ENCODE measurements at regions of chr4 and their contacts with region 1.

Region 1: DNA sequence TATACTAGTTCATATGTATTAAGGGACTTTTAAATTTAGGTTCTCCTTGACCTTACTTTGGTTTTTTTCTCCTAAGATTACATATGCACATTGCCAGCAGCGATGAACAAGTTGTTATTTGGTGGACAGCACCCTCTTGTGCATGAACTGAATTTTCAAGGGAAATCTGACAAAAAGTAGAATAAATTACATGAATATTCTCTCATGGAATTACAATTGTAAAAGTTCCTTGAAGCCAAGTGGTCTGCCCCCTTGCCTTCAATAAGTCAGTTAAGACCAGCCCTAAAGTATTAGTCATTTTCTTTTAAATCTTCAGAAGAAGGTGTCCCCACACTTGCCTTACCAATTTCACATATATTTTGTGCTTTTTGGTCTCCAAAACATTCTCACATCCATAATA is 30.7 kb upstream of the SMARCA5 start:
- DNase-seq: no peak
- ATAC-seq: no peak
- H3K4me3 Mint-ChIP-seq: no peak overlapping the region
- H3K27ac Mint-ChIP-seq: no peak overlapping the region
- H3K4me1 Mint-ChIP-seq: no peaks in the 10 kb centered on the region
- H3K27me3 Mint-ChIP-seq: peaks cover 6% of the 10 kb centered on the region
- CTCF ChIP-seq: no peak

Region 2: DNA sequence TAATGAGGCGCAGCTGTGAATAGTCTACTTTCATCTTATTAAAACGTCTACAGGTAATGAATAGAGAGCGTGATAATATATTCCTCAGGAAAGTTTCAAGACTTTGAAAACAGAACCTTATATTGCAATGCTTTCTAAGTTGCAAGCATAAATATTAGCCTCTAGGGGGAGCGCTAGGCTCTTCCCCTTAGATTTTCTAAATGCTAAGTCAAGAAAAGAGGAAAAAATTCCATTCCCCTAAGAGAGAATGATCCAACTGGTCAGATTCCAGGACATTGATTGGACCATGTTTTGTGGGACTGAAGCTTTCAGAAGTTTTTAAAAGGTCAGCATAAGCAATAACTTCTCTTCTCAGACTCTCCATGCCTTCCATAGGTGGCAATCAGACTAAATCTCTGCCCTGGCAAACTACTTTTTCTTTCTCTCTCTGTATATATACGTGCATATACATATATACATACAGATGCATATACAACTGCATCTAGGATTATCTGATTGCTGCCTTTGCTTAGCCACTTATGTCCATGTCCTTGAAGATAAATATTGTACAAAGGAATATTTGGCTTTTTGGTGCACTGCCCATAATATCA is 1129.6 kb before region 1 on chr4:
- CTCF ChIA-PET with region 1: no interaction called
- POLR2A ChIA-PET with region 1: no interaction called
- intact Hi-C with region 1: loop called (anchors 2 kb)
- DNase-seq: no peak
- ATAC-seq: no peak
- H3K4me3 Mint-ChIP-seq: no peak overlapping the region
- H3K27ac Mint-ChIP-seq: no peak overlapping the region
- H3K4me1 Mint-ChIP-seq: peaks cover 5% of the 10 kb centered on the region
- H3K27me3 Mint-ChIP-seq: no peaks in the 10 kb centered on the region
- CTCF ChIP-seq: no peak

Region 3: GRCh38 chr4:142984871-142985585 is 497.8 kb before region 1 on chr4:
- CTCF ChIA-PET with region 1: no interaction called
- POLR2A ChIA-PET with region 1: no interaction called
- intact Hi-C with region 1: loop called (anchors 2 kb)
- DNase-seq: no peak
- ATAC-seq: no peak
- H3K4me3 Mint-ChIP-seq: no peak overlapping the region
- H3K27ac Mint-ChIP-seq: no peak overlapping the region
- H3K4me1 Mint-ChIP-seq: no peaks in the 10 kb centered on the region
- H3K27me3 Mint-ChIP-seq: no peaks in the 10 kb centered on the region
- CTCF ChIP-seq: no peak

Region 4: DNA sequence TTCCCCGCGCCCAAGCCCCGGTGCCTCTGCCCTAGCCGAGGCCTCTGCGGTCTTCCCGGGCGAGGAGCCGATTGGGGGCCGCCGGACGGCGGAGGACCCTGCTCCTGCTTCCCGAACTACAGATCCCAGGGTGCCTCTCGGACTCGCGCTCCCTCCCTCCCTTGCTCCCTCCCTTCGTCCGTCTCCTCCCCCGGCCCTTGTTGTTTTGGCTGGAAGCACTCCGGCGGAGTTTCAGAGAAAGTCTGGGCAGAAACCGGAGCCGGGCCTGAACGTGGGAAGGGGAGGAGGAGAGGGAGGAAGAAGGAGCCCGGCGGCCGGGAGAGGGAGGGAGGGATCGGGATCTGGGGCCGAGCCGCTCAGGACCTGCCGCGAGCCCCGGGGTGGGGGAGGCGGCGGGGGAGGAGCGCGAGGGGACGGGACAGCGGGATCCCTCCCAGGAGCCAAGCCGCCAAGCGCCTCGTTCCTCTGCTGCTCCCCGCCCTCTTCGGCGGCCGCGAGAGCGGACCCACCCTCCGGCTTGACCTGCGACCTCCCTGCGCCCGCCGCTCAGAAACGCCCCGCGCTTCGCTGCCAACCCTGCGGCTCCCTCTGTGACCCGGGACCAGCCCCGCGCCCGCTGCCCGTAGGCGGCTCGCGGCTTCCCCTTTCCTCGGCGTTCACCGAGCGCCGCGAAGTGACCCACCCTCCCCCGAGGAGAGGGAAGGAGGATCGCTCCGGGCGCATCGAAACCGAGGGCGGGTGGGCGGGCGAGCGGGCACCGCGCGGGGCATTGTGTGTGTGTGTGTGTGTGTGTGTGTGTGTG is 146.7 kb before region 1 on chr4:
- CTCF ChIA-PET with region 1: no interaction called
- POLR2A ChIA-PET with region 1: no interaction called
- intact Hi-C with region 1: loop called (anchors 2 kb)
- DNase-seq: peak; percentile 67
- ATAC-seq: peak; percentile 57
- H3K4me3 Mint-ChIP-seq: peak overlapping the region; percentile 95
- H3K27ac Mint-ChIP-seq: peak overlapping the region; percentile 56
- H3K4me1 Mint-ChIP-seq: peaks cover 14% of the 10 kb centered on the region
- H3K27me3 Mint-ChIP-seq: peaks cover 15% of the 10 kb centered on the region
- CTCF ChIP-seq: no peak

Region 5: GRCh38 chr4:143399113-143399949 is 83.5 kb before region 1 on chr4:
- CTCF ChIA-PET with region 1: no interaction called
- POLR2A ChIA-PET with region 1: no interaction called
- intact Hi-C with region 1: loop called (anchors 1 kb)
- DNase-seq: no peak
- ATAC-seq: peak; percentile 56
- H3K4me3 Mint-ChIP-seq: no peak overlapping the region
- H3K27ac Mint-ChIP-seq: no peak overlapping the region
- H3K4me1 Mint-ChIP-seq: peaks cover 30% of the 10 kb centered on the region
- H3K27me3 Mint-ChIP-seq: no peaks in the 10 kb centered on the region
- CTCF ChIP-seq: no peak

Region 6: GRCh38 chr4:143458966-143459365 is 23.9 kb before region 1 on chr4:
- CTCF ChIA-PET with region 1: no interaction called
- POLR2A ChIA-PET with region 1: no interaction called
- intact Hi-C with region 1: no loop called
- DNase-seq: no peak
- ATAC-seq: no peak
- H3K4me3 Mint-ChIP-seq: no peak overlapping the region
- H3K27ac Mint-ChIP-seq: no peak overlapping the region
- H3K4me1 Mint-ChIP-seq: no peaks in the 10 kb centered on the region
- H3K27me3 Mint-ChIP-seq: no peaks in the 10 kb centered on the region
- CTCF ChIP-seq: no peak